HepG2 (cell line): ENCODE measurements at regions of chr19 and their contacts with region 1.

Region 1: DNA sequence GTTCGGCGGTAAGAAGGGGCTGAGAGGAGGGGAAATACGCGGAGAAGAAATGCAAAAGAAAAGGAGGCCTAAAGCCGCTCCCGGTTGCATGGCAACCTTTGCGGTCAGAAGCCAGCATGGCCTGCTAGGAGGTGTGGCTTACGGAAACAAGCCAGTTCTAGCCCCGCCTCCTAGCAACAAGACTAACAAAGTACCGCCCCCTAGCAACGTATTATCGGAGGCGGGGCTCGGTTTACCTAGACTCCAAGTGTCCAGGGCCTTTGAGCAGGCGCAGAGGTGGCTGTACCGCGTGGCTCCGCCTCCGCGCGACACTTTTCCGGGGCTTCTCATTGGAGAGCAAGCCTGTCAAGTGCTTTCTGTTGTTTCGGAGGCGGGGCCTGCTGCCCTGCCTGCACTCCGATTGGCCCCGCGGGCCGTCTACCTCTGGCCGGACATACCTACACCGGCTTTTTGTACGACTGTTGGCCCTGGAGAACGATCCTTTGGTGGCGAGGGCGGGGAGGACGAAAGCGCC is 337 bp upstream of the CYTH2 start:
- DNase-seq: peak; percentile 99
- ATAC-seq: peak; percentile 95
- H3K4me3 ChIP-seq: peak overlapping the region; percentile 76 to 97 (median 82)
- H3K27ac ChIP-seq: peak overlapping the region; percentile 91
- H3K4me1 ChIP-seq: peaks cover 17% of the 10 kb centered on the region
- H3K27me3 ChIP-seq: no peaks in the 10 kb centered on the region; a peak in 1 of 5 replicates
- CTCF ChIP-seq: no peak
- EP300 ChIP-seq: no peak
- POLR2A ChIP-seq: no peak
- RAD21 ChIP-seq: no peak

Region 2: GRCh38 chr19:48419158-48419920 is 49.5 kb before region 1 on chr19:
- CTCF ChIA-PET with region 1: no interaction called
- POLR2A ChIA-PET with region 1: no interaction called
- in situ Hi-C with region 1: no loop called
- intact Hi-C with region 1: no loop called
- DNase-seq: no peak
- ATAC-seq: peak; percentile 55
- H3K4me3 ChIP-seq: no peak overlapping the region
- H3K27ac ChIP-seq: no peak overlapping the region
- H3K4me1 ChIP-seq: peaks cover 37% of the 10 kb centered on the region
- H3K27me3 ChIP-seq: no peaks in the 10 kb centered on the region; a peak in 1 of 5 replicates
- CTCF ChIP-seq: no peak
- EP300 ChIP-seq: no peak
- POLR2A ChIP-seq: no peak
- RAD21 ChIP-seq: no peak

Region 3: GRCh38 chr19:48433337-48433736 is 35.5 kb before region 1 on chr19:
- CTCF ChIA-PET with region 1: no interaction called
- POLR2A ChIA-PET with region 1: no interaction called
- in situ Hi-C with region 1: no loop called
- intact Hi-C with region 1: no loop called
- DNase-seq: no peak
- ATAC-seq: no peak
- H3K4me3 ChIP-seq: no peak overlapping the region
- H3K27ac ChIP-seq: no peak overlapping the region
- H3K4me1 ChIP-seq: no peaks in the 10 kb centered on the region
- H3K27me3 ChIP-seq: no peaks in the 10 kb centered on the region
- CTCF ChIP-seq: no peak
- EP300 ChIP-seq: no peak
- POLR2A ChIP-seq: no peak
- RAD21 ChIP-seq: no peak

Region 4: DNA sequence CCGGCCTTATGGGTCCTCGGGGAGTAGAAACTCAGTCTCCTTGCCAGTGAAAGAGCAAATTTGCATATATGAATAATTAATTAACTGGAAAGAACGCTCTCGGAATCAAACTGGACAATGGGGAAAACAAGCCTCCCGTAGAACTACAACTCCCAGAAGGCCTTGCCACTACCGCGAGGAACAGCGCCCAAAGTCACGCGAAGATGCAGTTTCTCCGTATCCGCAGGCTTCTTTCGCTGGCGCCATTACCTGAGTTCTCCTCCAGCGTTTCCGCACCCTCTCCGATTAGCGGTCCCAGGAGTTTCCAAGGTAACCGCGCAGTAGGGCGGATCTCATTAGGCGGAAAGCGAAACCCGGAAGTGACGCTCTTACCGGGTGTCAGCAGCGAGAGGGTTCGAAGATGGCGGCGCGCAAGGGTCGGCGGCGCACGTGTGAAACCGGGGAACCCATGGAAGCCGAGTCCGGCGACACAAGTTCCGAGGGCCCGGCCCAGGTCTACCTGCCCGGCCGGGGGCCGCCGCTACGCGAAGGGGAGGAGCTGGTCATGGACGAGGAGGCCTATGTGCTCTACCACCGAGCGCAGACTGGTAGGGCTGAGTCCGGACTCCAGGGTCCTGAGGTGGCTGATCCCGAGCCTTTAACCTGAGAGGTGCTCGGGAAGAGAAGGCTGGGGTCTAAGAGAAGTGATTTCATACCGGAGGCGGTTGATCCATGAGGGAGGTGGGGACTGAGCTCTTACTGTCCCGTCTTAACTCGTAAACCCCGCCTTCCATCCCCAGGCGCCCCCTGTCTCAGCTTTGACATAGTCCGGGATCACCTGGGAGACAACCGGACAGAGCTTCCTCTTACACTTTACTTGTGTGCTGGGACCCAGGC is 23.0 kb before region 1 on chr19 and contains the start of gene GRWD1:
- CTCF ChIA-PET with region 1: no interaction called
- POLR2A ChIA-PET with region 1: interaction called, 3 read pairs
- in situ Hi-C with region 1: no loop called
- intact Hi-C with region 1: loop called (anchors 1 kb)
- DNase-seq: peak; percentile 96
- ATAC-seq: peak; percentile 89
- H3K4me3 ChIP-seq: peak within 1 kb of the TSS; percentile 77 to 95 (median 80)
- H3K27ac ChIP-seq: peak within 1 kb of the TSS; percentile 71
- H3K4me1 ChIP-seq: peaks cover 22% of the 10 kb centered on the region
- H3K27me3 ChIP-seq: no peaks in the 10 kb centered on the region; a peak in 1 of 5 replicates
- CTCF ChIP-seq: peak; percentile 41
- EP300 ChIP-seq: no peak
- POLR2A ChIP-seq: peak; percentile 81 to 83
- RAD21 ChIP-seq: peak; percentile 19; the same call in 1 of the 2 replicates
- total RNA-seq, gene GRWD1: 46.6 and 52.3 TPM in 2 replicates